SK-N-SH (cell line): ENCODE measurements at regions of chr22 and their contacts with region 1.

Region 1: GRCh38 chr22:22959147-22959827 is 71.7 kb downstream of the IGLL5 start:
- DNase-seq: peak; percentile 73
- H3K4me3 ChIP-seq: no peak overlapping the region; a peak in 1 of 4 replicates
- H3K27ac ChIP-seq: no peak overlapping the region
- H3K4me1 ChIP-seq: peaks cover 0 to 2% of the 10 kb centered on the region in 2 experiments; a peak in 1 of 4 replicates
- H3K27me3 ChIP-seq: no peaks in the 10 kb centered on the region
- CTCF ChIP-seq: peak; percentile 98
- EP300 ChIP-seq: no peak
- RAD21 ChIP-seq: peak; percentile 100

Region 2: GRCh38 chr22:22587577-22588188 is 371.6 kb before region 1 on chr22:
- CTCF ChIA-PET with region 1: interaction called, 15 read pairs
- POLR2A ChIA-PET with region 1: no interaction called
- DNase-seq: no peak
- H3K4me3 ChIP-seq: no peak overlapping the region
- H3K27ac ChIP-seq: no peak overlapping the region
- H3K4me1 ChIP-seq: no peaks in the 10 kb centered on the region; a peak in 1 of 4 replicates
- H3K27me3 ChIP-seq: peaks cover 3% of the 10 kb centered on the region; the same call in 1 of the 2 replicates
- CTCF ChIP-seq: no peak
- EP300 ChIP-seq: no peak
- RAD21 ChIP-seq: no peak

Region 3: GRCh38 chr22:22884010-22884887 is 75.0 kb before region 1 on chr22:
- CTCF ChIA-PET with region 1: interaction called, 63 read pairs
- POLR2A ChIA-PET with region 1: no interaction called
- DNase-seq: peak; percentile 79
- H3K4me3 ChIP-seq: no peak overlapping the region; a peak in 1 of 4 replicates
- H3K27ac ChIP-seq: no peak overlapping the region
- H3K4me1 ChIP-seq: peaks cover 0 to 33% of the 10 kb centered on the region in 2 experiments; a peak in 2 of 4 replicates
- H3K27me3 ChIP-seq: peaks cover 10% of the 10 kb centered on the region
- CTCF ChIP-seq: peak; percentile 59
- EP300 ChIP-seq: no peak
- RAD21 ChIP-seq: peak; percentile 91

Region 4: GRCh38 chr22:23012081-23012622 is 52.9 kb after region 1 on chr22:
- CTCF ChIA-PET with region 1: interaction called, 10 read pairs
- POLR2A ChIA-PET with region 1: no interaction called
- DNase-seq: no peak
- H3K4me3 ChIP-seq: no peak overlapping the region
- H3K27ac ChIP-seq: no peak overlapping the region
- H3K4me1 ChIP-seq: no peaks in the 10 kb centered on the region
- H3K27me3 ChIP-seq: no peaks in the 10 kb centered on the region; the same call in 1 of the 2 replicates
- CTCF ChIP-seq: no peak
- EP300 ChIP-seq: no peak
- RAD21 ChIP-seq: no peak

Region 5: DNA sequence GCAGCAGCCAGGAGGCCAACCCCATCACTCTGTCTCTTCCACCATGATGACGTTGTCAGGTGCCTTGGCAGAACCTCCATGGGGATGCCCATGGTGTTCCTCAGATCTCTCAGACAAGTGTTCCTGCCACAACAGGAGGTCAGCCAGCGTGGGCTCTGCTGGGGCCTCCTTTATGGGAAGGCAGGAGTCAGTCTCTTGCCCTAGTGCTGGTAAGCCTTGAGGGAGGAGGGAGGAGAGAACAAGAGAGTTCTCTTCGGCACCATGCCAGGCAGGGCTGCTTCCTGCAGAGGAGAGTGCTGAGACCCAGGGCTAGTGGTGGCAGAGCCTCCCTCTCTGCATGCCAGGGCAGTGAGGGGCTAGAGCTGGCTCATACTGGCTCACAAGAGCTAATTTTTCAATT is 143.5 kb after region 1 on chr22:
- CTCF ChIA-PET with region 1: interaction called, 24 read pairs
- POLR2A ChIA-PET with region 1: no interaction called
- DNase-seq: no peak
- H3K4me3 ChIP-seq: no peak overlapping the region
- H3K27ac ChIP-seq: no peak overlapping the region; a peak in 1 of 4 replicates
- H3K4me1 ChIP-seq: peaks cover 0 to 66% of the 10 kb centered on the region in 2 experiments; a peak in 1 of 4 replicates
- H3K27me3 ChIP-seq: no peaks in the 10 kb centered on the region
- CTCF ChIP-seq: no peak
- EP300 ChIP-seq: no peak
- RAD21 ChIP-seq: no peak

Region 6: DNA sequence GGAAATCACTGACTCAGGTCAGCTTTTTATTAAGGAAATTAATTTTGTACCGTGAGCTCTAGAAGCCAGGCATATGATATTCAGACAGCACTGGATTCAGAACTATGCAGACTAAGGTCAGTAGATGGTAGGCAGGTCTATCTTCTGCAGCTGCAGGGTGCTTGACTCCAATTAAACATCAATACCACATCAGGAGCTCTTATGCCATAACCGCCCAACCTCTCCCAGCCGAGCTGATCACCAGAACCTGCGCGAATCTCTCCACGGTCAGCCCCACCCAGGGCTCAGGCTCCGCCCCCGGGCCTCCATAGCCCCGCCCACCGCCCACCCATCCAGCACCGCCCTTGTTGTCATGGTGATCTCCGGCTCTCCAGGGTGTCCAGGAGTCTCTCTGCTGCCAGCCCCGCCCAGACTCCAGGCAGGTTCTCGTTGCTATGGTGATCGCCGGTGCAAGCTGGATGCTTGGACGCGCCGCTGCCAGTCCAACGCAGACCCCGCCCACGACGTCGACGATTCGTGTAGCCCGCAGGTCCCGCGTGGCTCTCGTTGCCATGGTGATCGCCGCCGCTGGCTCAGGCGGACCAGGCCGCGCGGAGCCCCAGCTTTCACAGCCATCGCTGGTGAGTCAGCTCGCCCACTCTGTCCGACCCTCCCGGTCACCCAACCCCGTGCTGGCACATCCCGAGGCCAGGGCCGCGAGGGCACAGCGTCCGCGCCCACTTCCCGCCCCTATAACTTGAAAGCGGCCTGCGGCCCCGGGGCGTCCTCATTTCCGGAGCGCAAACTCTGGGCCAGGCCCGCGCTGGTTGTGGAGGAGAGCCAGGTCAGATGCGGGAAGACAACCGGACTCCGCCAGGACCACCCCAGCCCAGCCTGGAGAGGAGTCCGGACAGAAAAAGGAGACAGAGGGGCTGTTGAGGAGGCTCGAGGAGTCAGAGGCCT is 185.9 kb after region 1 on chr22 and contains the start of gene RAB36:
- CTCF ChIA-PET with region 1: interaction called, 31 read pairs
- POLR2A ChIA-PET with region 1: no interaction called
- DNase-seq: peak; percentile 98
- H3K4me3 ChIP-seq: peak within 1 kb of the TSS; percentile 73 to 79
- H3K27ac ChIP-seq: peak within 1 kb of the TSS; percentile 62 to 73
- H3K4me1 ChIP-seq: peaks cover 6 to 17% of the 10 kb centered on the region in 2 experiments; a peak in 1 of 4 replicates
- H3K27me3 ChIP-seq: no peaks in the 10 kb centered on the region
- CTCF ChIP-seq: no peak
- EP300 ChIP-seq: no peak
- RAD21 ChIP-seq: no peak
- polyA plus RNA-seq, gene RAB36: 6.6 and 6.8 TPM in 2 replicates

Region 7: DNA sequence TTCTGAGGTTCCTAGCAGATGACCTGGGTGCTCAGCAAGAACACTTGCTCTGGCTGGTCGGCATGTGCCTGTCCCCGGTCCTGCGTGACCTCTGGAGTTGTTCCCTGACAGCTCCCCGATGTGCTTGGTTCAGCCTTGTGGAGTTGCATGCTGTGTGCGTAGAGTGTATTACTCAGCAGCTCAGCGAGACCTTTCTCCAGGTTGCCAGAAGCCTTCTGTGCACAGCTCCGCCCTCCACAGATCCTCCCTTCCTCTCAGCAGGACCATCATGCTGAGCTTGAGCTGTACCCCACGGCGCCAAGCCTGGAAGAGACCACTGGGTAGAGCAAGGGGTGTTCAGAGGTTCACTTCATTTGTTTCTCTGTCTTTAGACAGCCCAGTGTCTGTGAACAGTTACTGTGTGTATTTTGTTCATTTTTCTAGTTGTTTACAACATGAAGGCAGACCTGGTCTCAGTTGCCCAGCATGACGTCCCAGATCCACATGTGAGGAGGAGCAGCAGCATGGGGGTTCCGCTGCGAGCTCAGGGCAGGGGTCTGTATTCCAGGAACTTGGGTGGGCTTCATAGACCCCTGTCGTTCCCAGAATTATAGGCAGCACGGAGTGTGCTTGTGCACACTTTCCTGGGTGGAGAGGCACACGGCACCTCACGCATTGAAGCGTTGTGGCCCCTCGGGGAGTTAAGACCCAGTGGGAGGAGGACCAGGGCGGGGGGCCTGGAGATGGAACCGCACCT is 472.2 kb after region 1 on chr22:
- CTCF ChIA-PET with region 1: no interaction called
- POLR2A ChIA-PET with region 1: no interaction called
- DNase-seq: no peak
- H3K4me3 ChIP-seq: no peak overlapping the region
- H3K27ac ChIP-seq: no peak overlapping the region
- H3K4me1 ChIP-seq: peaks cover 0 to 9% of the 10 kb centered on the region in 2 experiments; a peak in 2 of 4 replicates
- H3K27me3 ChIP-seq: no peaks in the 10 kb centered on the region
- CTCF ChIP-seq: no peak
- EP300 ChIP-seq: no peak
- RAD21 ChIP-seq: no peak